ENCODE measurements at regions of chrX and their contacts with region 1.

Region 1: DNA sequence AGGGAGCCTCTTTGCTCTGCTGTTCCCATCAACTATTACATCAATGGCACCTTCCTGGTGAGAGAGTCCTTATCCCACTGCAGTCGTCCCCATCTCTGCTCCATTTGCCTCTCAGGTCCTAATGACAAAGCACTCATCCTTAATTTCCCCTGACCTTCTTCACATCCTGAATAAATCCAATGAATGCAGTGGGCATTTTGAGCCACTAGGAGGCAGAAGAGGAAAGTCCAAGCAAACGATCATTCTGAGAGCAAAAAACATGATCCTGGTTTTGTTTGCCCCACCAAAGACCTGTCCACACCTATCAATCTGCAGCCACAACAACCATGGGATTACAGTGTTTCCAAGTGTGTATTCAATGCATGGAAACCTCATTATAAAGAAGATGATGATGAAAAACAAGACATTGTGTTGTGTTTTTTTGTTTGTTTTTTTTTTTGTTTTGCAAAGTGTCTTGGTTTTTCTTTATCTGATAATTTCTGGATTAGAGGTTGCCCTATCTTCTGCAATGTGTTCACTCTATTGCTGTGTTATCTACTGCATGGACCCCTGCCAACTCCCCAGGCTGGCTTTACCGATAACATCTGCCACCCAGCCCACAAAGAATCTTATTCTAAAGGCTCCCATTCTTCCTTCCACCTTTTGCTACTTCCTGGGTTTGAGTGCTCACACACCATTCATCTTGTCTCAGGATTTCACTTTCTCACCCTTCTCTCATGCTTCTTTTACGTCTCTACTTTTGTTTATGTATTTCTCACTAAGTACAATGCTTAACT is 207.2 kb downstream of the NLGN4X start:
- DNase-seq: peak; percentile 46
- ATAC-seq: no peak
- H3K4me3 ChIP-seq: no peak overlapping the region
- H3K4me3 Mint-ChIP-seq: no peak overlapping the region
- H3K27ac ChIP-seq: no peak overlapping the region
- H3K27ac Mint-ChIP-seq: peak overlapping the region; percentile 0
- H3K4me1 ChIP-seq: no peaks in the 10 kb centered on the region
- H3K4me1 Mint-ChIP-seq: no peaks in the 10 kb centered on the region
- H3K27me3 ChIP-seq: no peaks in the 10 kb centered on the region
- H3K27me3 Mint-ChIP-seq: peaks cover 11% of the 10 kb centered on the region
- CTCF ChIP-seq: peak; percentile 69

Region 2: DNA sequence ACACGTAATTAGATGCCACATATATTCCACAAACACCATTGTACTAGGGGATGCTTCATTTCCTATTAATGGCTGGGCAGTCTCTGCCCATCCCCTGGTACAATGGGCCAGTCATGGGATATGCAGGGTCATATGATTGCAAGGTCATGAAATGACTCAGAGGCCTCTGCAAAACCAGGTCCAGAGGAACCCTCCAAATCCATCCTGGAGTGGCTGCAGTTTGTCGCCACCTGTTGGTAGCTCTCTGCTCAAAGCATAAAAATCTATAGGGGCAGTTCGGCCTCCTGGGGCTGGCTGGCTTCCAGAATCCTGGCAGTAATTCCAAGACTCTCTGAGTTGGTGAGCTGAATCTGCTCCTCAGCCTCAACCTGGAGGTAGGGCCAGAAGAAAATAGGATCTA is 1149.4 kb after region 1 on chrX:
- CTCF ChIA-PET with region 1: no interaction called
- POLR2A ChIA-PET with region 1: no interaction called
- intact Hi-C with region 1: loop called (anchors 2 kb)
- DNase-seq: peak; percentile 21
- ATAC-seq: no peak
- H3K4me3 ChIP-seq: no peak overlapping the region
- H3K4me3 Mint-ChIP-seq: no peak overlapping the region
- H3K27ac ChIP-seq: no peak overlapping the region
- H3K27ac Mint-ChIP-seq: no peak overlapping the region
- H3K4me1 ChIP-seq: no peaks in the 10 kb centered on the region
- H3K4me1 Mint-ChIP-seq: peaks cover 2% of the 10 kb centered on the region
- H3K27me3 ChIP-seq: no peaks in the 10 kb centered on the region
- H3K27me3 Mint-ChIP-seq: no peaks in the 10 kb centered on the region
- CTCF ChIP-seq: peak; percentile 25

Region 3: DNA sequence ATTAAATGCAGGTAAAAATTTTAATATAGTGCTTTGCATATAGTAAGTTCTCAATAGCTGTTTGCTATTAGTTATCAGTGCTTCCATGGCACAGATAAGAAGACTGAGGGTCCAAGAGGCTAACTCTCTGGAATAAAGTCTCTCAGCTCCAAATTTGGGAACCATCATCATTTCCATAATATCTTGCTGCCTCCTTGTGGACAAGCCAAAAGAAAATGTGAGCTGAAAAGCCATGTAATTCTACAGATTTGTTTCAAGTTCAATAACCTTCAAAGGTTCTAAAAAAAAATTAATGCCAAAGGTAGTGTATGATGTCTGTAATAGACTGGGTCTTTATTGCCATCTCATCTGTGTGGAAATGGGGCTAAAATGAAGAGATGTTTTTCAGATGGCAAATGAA is 1684.5 kb after region 1 on chrX:
- CTCF ChIA-PET with region 1: no interaction called
- POLR2A ChIA-PET with region 1: no interaction called
- intact Hi-C with region 1: loop called (anchors 10 kb)
- DNase-seq: no peak
- ATAC-seq: no peak
- H3K4me3 ChIP-seq: no peak overlapping the region
- H3K4me3 Mint-ChIP-seq: no peak overlapping the region
- H3K27ac ChIP-seq: no peak overlapping the region
- H3K27ac Mint-ChIP-seq: no peak overlapping the region
- H3K4me1 ChIP-seq: no peaks in the 10 kb centered on the region
- H3K4me1 Mint-ChIP-seq: no peaks in the 10 kb centered on the region
- H3K27me3 ChIP-seq: no peaks in the 10 kb centered on the region
- H3K27me3 Mint-ChIP-seq: no peaks in the 10 kb centered on the region
- CTCF ChIP-seq: no peak